HepG2 (cell line): ENCODE measurements at regions of chr16 and their contacts with region 1.

Region 1: DNA sequence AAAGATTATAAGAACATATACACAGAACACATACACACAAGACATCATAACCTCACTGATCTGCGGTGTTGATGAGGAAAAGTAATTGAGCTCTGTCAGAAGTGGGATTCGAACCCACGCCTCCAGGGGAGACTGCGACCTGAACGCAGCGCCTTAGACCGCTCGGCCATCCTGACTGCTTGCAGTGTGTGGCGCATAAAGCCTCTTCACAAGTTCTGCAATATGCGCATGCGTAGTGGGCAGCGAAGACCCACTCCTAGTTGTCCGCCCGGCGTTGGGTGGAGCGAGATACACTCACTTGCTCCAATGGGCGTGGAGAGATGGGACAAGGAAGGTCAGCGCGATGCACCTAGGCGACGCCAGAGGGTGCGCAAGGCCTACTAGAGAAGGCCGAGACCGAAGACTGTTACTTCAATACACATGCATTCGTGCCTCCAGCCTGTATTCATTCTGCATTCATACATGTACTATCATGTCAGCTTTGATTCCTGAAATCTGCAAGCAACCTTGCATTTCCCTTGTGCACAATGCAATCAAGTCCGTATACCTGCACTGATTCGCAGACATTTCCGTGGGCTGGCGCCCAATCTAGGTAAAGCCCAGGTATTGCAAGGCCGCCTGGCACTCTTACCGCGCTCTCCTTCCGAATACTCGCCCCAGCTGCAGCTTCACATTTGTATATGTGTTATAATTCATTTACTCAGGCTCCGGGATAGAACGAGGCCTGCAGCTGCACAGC is 16.1 kb upstream of the PLLP start:
- DNase-seq: peak; percentile 99
- ATAC-seq: peak; percentile 72
- H3K4me3 ChIP-seq: peak overlapping the region; percentile 62 to 84 (median 63)
- H3K27ac ChIP-seq: peak overlapping the region; percentile 59
- H3K4me1 ChIP-seq: peaks cover 76% of the 10 kb centered on the region
- H3K27me3 ChIP-seq: no peaks in the 10 kb centered on the region; a peak in 1 of 5 replicates
- CTCF ChIP-seq: peak; percentile 100
- EP300 ChIP-seq: peak in 1 of 2 experiments; percentile 16; a peak in 1 of 4 replicates
- POLR2A ChIP-seq: no peak
- RAD21 ChIP-seq: peak; percentile 100

Region 2: GRCh38 chr16:57091975-57092785 is 208.4 kb before region 1 on chr16 and contains the start of gene CPNE2:
- CTCF ChIA-PET with region 1: no interaction called
- POLR2A ChIA-PET with region 1: no interaction called
- in situ Hi-C with region 1: loop called (anchors 10 kb)
- intact Hi-C with region 1: loop called (anchors 1 kb)
- DNase-seq: no peak
- ATAC-seq: peak; percentile 63
- H3K4me3 ChIP-seq: peak within 1 kb of the TSS; percentile 72 to 84 (median 83)
- H3K27ac ChIP-seq: no peak within 1 kb of the TSS
- H3K4me1 ChIP-seq: peaks cover 23% of the 10 kb centered on the region
- H3K27me3 ChIP-seq: peaks cover 2 to 24% of the 10 kb centered on the region in 2 experiments; a peak in 4 of 5 replicates
- CTCF ChIP-seq: peak; percentile 20; the same call in 1 of the 2 replicates
- EP300 ChIP-seq: no peak
- POLR2A ChIP-seq: no peak; a peak in 1 of 4 replicates
- RAD21 ChIP-seq: no peak
- total RNA-seq, gene CPNE2: 8.0 and 10.6 TPM in 2 replicates

Region 3: DNA sequence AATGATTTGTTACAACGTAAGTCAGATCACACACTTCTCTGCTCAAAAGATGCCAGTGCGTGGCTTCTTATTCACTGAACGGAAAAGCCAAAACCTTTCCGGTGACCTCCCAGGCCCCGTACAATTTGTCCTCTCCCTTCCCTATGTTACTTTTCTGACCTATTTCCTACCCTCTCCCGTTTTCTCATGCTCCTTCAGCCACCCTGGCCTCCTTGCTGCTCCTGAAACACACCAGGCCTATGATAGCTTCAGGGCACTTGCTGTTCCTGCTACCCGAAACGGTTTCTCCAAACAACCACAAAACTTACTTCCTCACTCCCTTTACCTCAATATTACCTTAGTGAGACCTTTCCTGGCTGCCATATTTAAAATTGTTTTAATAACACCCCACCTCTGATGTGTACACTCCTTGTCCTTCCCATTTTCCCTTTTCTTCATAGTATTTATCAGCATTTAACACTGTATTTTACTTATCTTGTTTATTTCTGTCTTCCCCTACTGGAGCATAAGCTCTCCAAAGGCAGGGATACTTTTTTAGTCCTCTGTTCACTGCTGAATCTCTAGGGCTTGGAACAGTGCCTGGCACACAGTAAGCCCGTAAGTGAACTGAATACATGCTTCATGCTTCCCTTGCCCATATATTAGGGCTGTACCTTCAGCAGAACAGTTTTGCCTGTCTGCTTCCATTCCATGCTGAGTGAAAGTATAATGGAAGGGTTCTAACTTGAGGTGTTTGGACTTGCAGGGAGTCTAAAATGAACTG is 66.4 kb before region 1 on chr16:
- CTCF ChIA-PET with region 1: no interaction called
- POLR2A ChIA-PET with region 1: no interaction called
- in situ Hi-C with region 1: no loop called
- intact Hi-C with region 1: no loop called
- DNase-seq: no peak
- ATAC-seq: no peak
- H3K4me3 ChIP-seq: no peak overlapping the region
- H3K27ac ChIP-seq: no peak overlapping the region
- H3K4me1 ChIP-seq: no peaks in the 10 kb centered on the region
- H3K27me3 ChIP-seq: no peaks in the 10 kb centered on the region
- CTCF ChIP-seq: no peak
- EP300 ChIP-seq: no peak
- POLR2A ChIP-seq: no peak
- RAD21 ChIP-seq: no peak

Region 4: DNA sequence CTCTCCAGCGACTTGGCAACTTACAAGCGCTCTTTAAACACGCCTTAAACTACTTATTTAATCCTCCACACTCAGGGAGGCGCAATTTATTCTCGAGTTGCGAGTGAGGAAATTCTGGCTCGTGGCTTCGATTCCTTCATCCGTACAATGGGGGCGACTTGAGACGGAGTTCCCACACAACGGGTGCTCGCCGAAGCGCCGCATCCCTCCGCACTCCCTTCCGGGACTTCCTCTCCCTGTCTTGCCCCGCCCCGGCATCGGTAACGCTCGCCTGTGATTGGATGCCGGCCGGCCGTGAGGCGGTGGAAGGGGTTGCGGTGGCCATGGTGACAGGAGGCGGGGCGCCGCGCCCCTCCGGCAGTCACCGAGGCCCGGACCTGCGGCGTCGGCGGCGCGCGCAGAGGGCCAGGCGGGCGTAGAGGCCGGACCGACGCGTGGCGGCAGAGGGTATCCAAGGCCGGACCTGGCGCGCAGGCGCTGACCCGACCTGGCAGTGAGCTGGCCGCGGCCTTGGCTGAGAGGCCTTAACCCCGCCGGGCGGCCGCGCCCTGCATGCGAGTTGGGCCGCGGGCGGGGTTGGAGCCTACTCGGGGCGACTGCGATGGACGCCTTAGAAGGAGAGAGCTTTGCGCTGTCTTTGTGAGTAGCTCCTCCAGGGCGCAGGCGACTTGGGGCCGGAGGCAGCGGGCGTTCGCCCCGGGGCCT is 55.6 kb before region 1 on chr16 and contains the start of gene ARL2BP:
- CTCF ChIA-PET with region 1: no interaction called
- POLR2A ChIA-PET with region 1: interaction called, 5 read pairs
- in situ Hi-C with region 1: no loop called
- intact Hi-C with region 1: loop called (anchors 2 kb)
- DNase-seq: peak; percentile 96
- ATAC-seq: peak; percentile 96
- H3K4me3 ChIP-seq: peak within 1 kb of the TSS; percentile 77 to 89 (median 81)
- H3K27ac ChIP-seq: peak within 1 kb of the TSS; percentile 91
- H3K4me1 ChIP-seq: peaks cover 40% of the 10 kb centered on the region
- H3K27me3 ChIP-seq: no peaks in the 10 kb centered on the region
- CTCF ChIP-seq: no peak; the same call in none of the 2 replicates
- EP300 ChIP-seq: 0 out of 4 replicates have a peak, but pooled peaks of 1 of the 2 experiments have one; percentile 7
- POLR2A ChIP-seq: peak; percentile 82 to 84
- RAD21 ChIP-seq: peak; percentile 79
- total RNA-seq, gene ARL2BP: 67.6 and 97.1 TPM in 2 replicates

Region 5: DNA sequence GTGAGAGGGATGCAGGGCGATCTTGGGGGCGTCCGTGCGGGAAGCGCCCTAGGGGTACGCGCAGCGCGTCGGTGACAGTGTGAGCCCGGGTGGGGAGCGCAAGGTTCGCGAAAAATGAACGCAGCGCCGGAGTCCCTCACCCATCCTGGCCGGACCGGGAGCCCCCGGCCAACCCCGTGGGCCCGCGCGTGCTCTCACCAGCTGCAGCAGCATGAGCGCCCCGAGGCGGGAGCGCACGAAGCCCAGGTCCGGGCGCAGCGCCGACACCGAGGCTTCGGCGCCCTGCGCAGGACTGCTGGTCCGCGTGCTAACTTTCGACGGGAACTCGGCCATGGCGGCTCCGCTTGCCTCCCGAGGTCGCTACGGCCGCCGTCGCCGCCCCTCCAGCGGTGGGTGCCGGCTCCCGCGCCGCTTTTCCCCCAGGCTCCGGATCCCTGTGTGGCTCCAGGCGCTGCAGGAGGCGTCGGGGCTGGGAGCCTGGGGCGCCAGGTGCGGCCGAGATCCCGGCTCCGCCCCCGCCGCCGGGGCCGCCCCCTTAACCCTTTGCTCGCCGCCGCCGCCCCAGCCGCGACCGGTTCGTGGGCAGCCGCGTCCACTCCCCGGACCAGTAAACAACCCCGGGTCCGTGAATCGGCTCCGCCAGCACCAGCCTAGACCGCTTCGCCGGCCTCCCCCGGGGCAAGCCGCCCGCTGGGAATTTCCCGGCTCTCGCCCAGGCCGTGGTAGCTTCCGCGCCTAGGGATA is 16.2 kb before region 1 on chr16 and contains the start of gene PLLP:
- CTCF ChIA-PET with region 1: no interaction called
- POLR2A ChIA-PET with region 1: interaction called, 21 read pairs
- in situ Hi-C with region 1: no loop called
- intact Hi-C with region 1: no loop called
- DNase-seq: no peak
- ATAC-seq: peak; percentile 68
- H3K4me3 ChIP-seq: peak within 1 kb of the TSS; percentile 75 to 91 (median 78)
- H3K27ac ChIP-seq: peak within 1 kb of the TSS; percentile 76
- H3K4me1 ChIP-seq: peaks cover 86% of the 10 kb centered on the region
- H3K27me3 ChIP-seq: peaks cover 1 to 6% of the 10 kb centered on the region in 2 experiments; a peak in 1 of 5 replicates
- CTCF ChIP-seq: no peak; the same call in 1 of the 2 replicates
- EP300 ChIP-seq: no peak
- POLR2A ChIP-seq: peak; percentile 52 to 91; a peak in 3 of 4 replicates
- RAD21 ChIP-seq: peak; percentile 61
- total RNA-seq, gene PLLP: 39.5 and 60.6 TPM in 2 replicates

Region 6: DNA sequence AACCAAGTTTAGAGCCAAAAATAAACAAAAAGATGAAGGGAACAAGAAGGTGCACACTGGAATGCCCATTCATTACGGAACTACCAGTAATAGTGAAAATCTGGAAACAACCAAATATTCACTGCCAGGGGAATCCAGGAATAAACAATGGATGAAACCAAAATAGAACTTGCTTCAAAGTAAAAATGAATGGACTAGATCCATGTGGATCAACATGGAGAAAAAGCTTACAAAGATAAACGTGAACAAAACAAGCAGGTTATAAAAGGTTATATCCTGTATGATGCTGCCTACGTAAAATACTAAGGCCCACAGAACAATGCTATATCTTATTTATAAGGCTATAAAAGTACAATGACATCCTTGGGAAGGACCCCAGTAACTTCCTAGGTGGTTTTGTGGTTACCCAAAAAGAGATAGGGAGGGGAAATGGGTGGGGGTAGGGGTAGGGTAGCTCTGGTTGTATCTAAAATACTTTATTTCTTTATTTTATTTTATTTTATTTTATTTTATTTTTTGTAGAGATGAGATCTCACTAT is 45.2 kb after region 1 on chr16:
- CTCF ChIA-PET with region 1: no interaction called
- POLR2A ChIA-PET with region 1: no interaction called
- in situ Hi-C with region 1: no loop called
- intact Hi-C with region 1: no loop called
- DNase-seq: no peak
- ATAC-seq: no peak
- H3K4me3 ChIP-seq: no peak overlapping the region
- H3K27ac ChIP-seq: no peak overlapping the region
- H3K4me1 ChIP-seq: peaks cover 43% of the 10 kb centered on the region
- H3K27me3 ChIP-seq: peaks cover 2 to 18% of the 10 kb centered on the region in 2 experiments; a peak in 3 of 5 replicates
- CTCF ChIP-seq: no peak
- EP300 ChIP-seq: no peak
- POLR2A ChIP-seq: no peak
- RAD21 ChIP-seq: no peak

Region 7: DNA sequence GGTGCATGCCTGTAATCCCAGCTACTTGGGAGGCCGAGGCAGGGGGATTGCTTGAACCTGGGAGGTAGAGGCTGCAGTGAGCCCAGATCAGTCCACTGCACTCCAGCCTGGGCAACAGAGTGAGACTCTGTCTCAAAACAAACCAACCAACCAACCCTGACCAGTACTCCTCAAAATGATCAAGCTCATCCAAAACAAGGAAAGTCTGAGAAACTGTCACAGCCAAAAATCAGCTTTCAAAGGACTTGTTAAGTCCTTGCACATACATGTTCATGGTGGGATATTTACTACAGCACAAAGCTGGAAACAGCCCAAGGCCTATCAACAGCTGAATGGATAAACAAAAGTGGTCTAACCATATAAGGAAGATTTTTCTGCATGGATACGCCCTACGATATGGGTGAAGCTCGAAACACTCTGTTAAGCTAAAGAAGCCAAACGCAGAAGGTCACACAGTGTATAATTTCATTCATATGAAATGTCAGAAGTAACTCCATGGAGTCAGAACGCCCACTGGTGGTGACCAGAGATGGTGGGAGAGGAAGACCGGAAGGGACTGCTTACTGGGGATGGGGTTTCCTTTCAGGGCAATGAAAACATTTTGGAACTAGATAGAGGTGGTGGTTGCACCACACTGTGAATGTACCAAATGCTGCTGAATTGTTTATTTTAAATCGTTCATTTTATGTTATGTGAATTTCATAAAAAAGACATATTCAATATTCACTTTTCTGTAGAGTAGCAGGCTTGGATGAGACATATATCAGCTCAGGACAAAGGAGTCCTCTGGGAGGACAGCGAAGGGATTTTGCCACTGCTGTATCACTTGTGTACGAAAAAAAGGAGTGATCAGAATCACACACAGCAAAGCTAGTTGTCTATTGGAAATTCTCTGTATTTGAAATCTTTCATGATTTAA is 121.7 kb after region 1 on chr16:
- CTCF ChIA-PET with region 1: interaction called, 142 read pairs
- POLR2A ChIA-PET with region 1: interaction called, 54 read pairs
- in situ Hi-C with region 1: loop called (anchors 5 kb)
- intact Hi-C with region 1: loop called (anchors 1 kb)
- DNase-seq: peak; percentile 77
- ATAC-seq: peak; percentile 74
- H3K4me3 ChIP-seq: no peak overlapping the region; a peak in 1 of 6 replicates
- H3K27ac ChIP-seq: no peak overlapping the region
- H3K4me1 ChIP-seq: peaks cover 32% of the 10 kb centered on the region
- H3K27me3 ChIP-seq: no peaks in the 10 kb centered on the region
- CTCF ChIP-seq: peak; percentile 91
- EP300 ChIP-seq: no peak
- POLR2A ChIP-seq: no peak
- RAD21 ChIP-seq: peak; percentile 72

Region 8: DNA sequence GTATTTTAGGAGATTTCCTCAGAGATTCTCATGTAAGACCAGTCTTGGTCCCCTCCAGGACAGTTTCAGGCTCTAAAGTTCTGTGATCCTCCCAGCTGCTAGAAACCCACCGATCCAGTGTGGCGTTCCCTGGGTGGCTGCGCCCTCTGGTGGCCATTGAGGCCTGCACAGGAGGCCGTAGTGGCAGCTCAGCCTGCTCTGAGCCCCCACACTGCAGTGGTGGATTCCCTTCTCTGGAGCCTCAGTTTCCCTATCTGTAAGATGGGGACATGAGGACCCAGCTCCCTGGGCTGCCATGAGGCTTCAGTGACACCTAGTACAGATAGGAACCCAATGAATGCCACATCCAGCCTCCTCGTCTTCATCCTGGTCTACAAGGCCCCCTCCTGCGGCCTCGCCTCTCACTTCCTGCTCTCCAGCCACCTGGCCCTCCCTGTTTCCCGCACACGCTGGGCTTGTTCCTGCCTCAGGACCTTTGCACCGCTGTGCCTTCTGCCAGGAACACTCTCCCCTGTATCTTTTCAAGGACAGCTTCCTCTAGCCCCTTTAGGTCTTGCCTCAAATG is 219.3 kb after region 1 on chr16:
- CTCF ChIA-PET with region 1: interaction called, 3 read pairs
- POLR2A ChIA-PET with region 1: interaction called, 3 read pairs
- in situ Hi-C with region 1: loop called (anchors 5 kb)
- intact Hi-C with region 1: loop called (anchors 1 kb)
- DNase-seq: peak; percentile 73
- ATAC-seq: peak; percentile 91
- H3K4me3 ChIP-seq: no peak overlapping the region
- H3K27ac ChIP-seq: no peak overlapping the region
- H3K4me1 ChIP-seq: peaks cover 14% of the 10 kb centered on the region
- H3K27me3 ChIP-seq: no peaks in the 10 kb centered on the region
- CTCF ChIP-seq: peak; percentile 99
- EP300 ChIP-seq: no peak
- POLR2A ChIP-seq: no peak
- RAD21 ChIP-seq: peak; percentile 99